HEK293 (cell line): ENCODE measurements at regions of chr19 and their contacts with region 1.

Region 1: DNA sequence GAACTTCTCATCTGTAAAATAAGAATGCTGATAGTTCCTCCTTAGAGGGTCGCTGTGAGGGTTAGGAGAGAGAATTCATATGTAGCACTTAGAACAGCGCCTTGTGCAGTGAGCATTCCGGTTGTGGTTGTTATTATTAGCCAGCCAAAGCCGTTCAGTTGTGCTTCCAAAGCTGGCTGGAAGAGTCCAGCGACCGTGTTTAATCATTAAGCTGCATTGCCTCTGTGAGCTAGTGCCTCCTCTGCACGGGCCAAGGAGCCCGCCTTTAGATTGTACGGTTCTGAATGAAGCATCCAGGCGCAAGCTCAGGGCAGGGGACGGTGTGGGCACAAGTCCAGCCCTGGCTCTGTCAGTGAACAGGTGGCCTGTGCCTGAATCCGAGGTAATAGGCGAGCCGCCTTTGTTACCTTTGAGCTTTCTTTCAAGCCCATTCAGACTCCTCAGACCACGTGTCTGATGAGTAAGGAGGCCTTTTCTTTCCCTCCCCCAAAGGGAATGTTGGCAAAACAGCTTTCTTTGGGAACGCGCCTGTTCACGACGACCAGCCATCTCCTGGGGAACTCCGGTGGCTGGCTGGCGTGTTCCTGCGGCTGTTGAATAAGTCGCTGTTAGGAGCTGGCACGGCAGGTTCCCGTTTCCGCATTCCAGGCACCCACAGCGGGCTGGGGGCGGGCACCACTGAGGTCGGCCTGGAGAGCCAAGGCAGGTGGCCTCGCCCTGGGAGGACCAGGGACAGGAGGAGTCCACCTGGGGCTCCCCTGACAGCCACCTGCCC is 25.1 kb downstream of the SIPA1L3 start:
- H3K4me3 ChIP-seq: peak overlapping the region; percentile 1
- H3K27ac ChIP-seq: no peak overlapping the region
- H3K4me1 ChIP-seq: peaks cover 25% of the 10 kb centered on the region
- CTCF ChIP-seq: no peak

Region 2: GRCh38 chr19:38004521-38005223 is 72.6 kb after region 1 on chr19:
- CTCF ChIA-PET with region 1: no interaction called
- POLR2A ChIA-PET with region 1: interaction called, 13 read pairs
- H3K4me3 ChIP-seq: no peak overlapping the region
- H3K27ac ChIP-seq: peak overlapping the region; percentile 85
- H3K4me1 ChIP-seq: peaks cover 29% of the 10 kb centered on the region
- CTCF ChIP-seq: no peak

Region 3: GRCh38 chr19:38033658-38034498 is 101.8 kb after region 1 on chr19:
- CTCF ChIA-PET with region 1: no interaction called
- POLR2A ChIA-PET with region 1: no interaction called
- H3K4me3 ChIP-seq: no peak overlapping the region
- H3K27ac ChIP-seq: no peak overlapping the region
- H3K4me1 ChIP-seq: peaks cover 5% of the 10 kb centered on the region; the same call in 1 of the 2 replicates
- CTCF ChIP-seq: no peak